ENCODE measurements at regions of chr17 and their contacts with region 1.

Region 1: GRCh38 chr17:77404812-77405581 is 264.2 kb downstream of the SEC14L1 start:
- DNase-seq: peak; percentile 69 to 92 (median 83)
- H3K4me3 ChIP-seq: peak overlapping the region; percentile 89
- H3K4me3 Mint-ChIP-seq: peak overlapping the region; percentile 84 to 99 (median 96)
- H3K27ac ChIP-seq: peak overlapping the region; percentile 48
- H3K27ac Mint-ChIP-seq: peak overlapping the region; percentile 88 to 99 (median 98)
- H3K4me1 ChIP-seq: peaks cover 93% of the 10 kb centered on the region
- H3K4me1 Mint-ChIP-seq: peaks cover 80 to 98% (median 89%) of the 10 kb centered on the region in 3 donors
- H3K27me3 ChIP-seq: no peaks in the 10 kb centered on the region
- H3K27me3 Mint-ChIP-seq: peaks cover 0 to 3% of the 10 kb centered on the region in 2 donors

Region 2: GRCh38 chr17:76791053-76791980 is 613.7 kb before region 1 on chr17:
- CTCF ChIA-PET with region 1: no interaction called
- POLR2A ChIA-PET with region 1: no interaction called
- DNase-seq: peak in 4 of 5 donors; percentile 9 to 49 (median 18)
- H3K4me3 ChIP-seq: no peak overlapping the region
- H3K4me3 Mint-ChIP-seq: peak overlapping the region in 6 of 7 donors; percentile 51 to 78 (median 62)
- H3K27ac ChIP-seq: peak overlapping the region; percentile 33
- H3K27ac Mint-ChIP-seq: peak overlapping the region in 7 of 8 donors; percentile 59 to 87 (median 83)
- H3K4me1 ChIP-seq: peaks cover 13% of the 10 kb centered on the region
- H3K4me1 Mint-ChIP-seq: peaks cover 11 to 12% (median 12%) of the 10 kb centered on the region in 3 donors
- H3K27me3 ChIP-seq: no peaks in the 10 kb centered on the region
- H3K27me3 Mint-ChIP-seq: peaks cover 0 to 2% of the 10 kb centered on the region in 2 donors

Region 3: DNA sequence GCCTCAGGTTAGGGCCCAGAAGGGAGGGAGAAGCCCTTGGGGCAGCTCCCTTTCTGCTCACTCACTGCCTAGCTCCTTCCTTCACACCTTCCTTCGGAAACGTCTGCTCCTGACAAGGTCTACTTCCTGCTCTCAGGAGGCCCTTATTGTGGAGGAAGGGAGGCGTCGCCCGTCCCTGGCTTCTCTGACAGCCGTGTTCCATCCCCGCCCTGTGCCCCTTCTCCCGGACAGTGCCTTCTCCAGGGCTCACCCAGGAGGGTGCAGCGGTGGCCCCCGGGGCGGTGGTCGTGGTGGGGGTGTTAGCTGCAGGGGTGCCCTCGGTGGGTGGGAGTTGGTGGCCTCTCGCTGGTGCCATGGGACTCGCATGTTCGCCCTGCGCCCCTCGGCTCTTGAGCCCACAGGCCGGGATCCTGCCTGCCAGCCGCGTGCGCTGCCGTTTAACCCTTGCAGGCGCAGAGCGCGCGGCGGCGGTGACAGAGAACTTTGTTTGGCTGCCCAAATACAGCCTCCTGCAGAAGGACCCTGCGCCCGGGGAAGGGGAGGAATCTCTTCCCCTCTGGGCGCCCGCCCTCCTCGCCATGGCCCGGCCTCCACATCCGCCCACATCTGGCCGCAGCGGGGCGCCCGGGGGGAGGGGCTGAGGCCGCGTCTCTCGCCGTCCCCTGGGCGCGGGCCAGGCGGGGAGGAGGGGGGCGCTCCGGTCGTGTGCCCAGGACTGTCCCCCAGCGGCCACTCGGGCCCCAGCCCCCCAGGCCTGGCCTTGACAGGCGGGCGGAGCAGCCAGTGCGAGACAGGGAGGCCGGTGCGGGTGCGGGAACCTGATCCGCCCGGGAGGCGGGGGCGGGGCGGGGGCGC is 32.3 kb before region 1 on chr17:
- CTCF ChIA-PET with region 1: interaction called, 29 read pairs
- POLR2A ChIA-PET with region 1: interaction called, 11 read pairs
- DNase-seq: peak; percentile 55 to 76 (median 65)
- H3K4me3 ChIP-seq: peak overlapping the region; percentile 77
- H3K4me3 Mint-ChIP-seq: peak overlapping the region; percentile 80 to 93 (median 82)
- H3K27ac ChIP-seq: peak overlapping the region; percentile 82
- H3K27ac Mint-ChIP-seq: peak overlapping the region; percentile 79 to 95 (median 88)
- H3K4me1 ChIP-seq: peaks cover 70% of the 10 kb centered on the region
- H3K4me1 Mint-ChIP-seq: peaks cover 56 to 71% (median 67%) of the 10 kb centered on the region in 3 donors
- H3K27me3 ChIP-seq: no peaks in the 10 kb centered on the region
- H3K27me3 Mint-ChIP-seq: no peaks in the 10 kb centered on the region

Region 4: GRCh38 chr17:77391668-77392375 is 13.2 kb before region 1 on chr17:
- CTCF ChIA-PET with region 1: interaction called, 113 read pairs
- POLR2A ChIA-PET with region 1: interaction called, 8 read pairs
- DNase-seq: peak in 2 of 5 donors; percentile 26 to 63
- H3K4me3 ChIP-seq: no peak overlapping the region
- H3K4me3 Mint-ChIP-seq: peak overlapping the region; percentile 20 to 76 (median 62)
- H3K27ac ChIP-seq: peak overlapping the region; percentile 3
- H3K27ac Mint-ChIP-seq: peak overlapping the region; percentile 76 to 96 (median 84)
- H3K4me1 ChIP-seq: peaks cover 72% of the 10 kb centered on the region
- H3K4me1 Mint-ChIP-seq: peaks cover 74 to 89% (median 79%) of the 10 kb centered on the region in 3 donors
- H3K27me3 ChIP-seq: no peaks in the 10 kb centered on the region
- H3K27me3 Mint-ChIP-seq: no peaks in the 10 kb centered on the region

Region 5: GRCh38 chr17:77429919-77430752 is 25.1 kb after region 1 on chr17:
- CTCF ChIA-PET with region 1: interaction called, 45 read pairs
- POLR2A ChIA-PET with region 1: interaction called, 5 read pairs
- DNase-seq: peak; percentile 70 to 86 (median 74)
- H3K4me3 ChIP-seq: no peak overlapping the region
- H3K4me3 Mint-ChIP-seq: peak overlapping the region in 2 of 7 donors; percentile 8 to 27
- H3K27ac ChIP-seq: no peak overlapping the region
- H3K27ac Mint-ChIP-seq: peak overlapping the region; percentile 29 to 89 (median 72)
- H3K4me1 ChIP-seq: peaks cover 99% of the 10 kb centered on the region
- H3K4me1 Mint-ChIP-seq: peaks cover 70 to 98% (median 80%) of the 10 kb centered on the region in 3 donors
- H3K27me3 ChIP-seq: no peaks in the 10 kb centered on the region
- H3K27me3 Mint-ChIP-seq: no peaks in the 10 kb centered on the region

Region 6: GRCh38 chr17:77451245-77451893 is 46.4 kb after region 1 on chr17:
- CTCF ChIA-PET with region 1: interaction called, 16 read pairs
- POLR2A ChIA-PET with region 1: interaction called, 9 read pairs
- DNase-seq: peak; percentile 60 to 80 (median 71)
- H3K4me3 ChIP-seq: peak overlapping the region; percentile 95
- H3K4me3 Mint-ChIP-seq: peak overlapping the region; percentile 89 to 99 (median 98)
- H3K27ac ChIP-seq: peak overlapping the region; percentile 77
- H3K27ac Mint-ChIP-seq: peak overlapping the region; percentile 85 to 100 (median 97)
- H3K4me1 ChIP-seq: peaks cover 57% of the 10 kb centered on the region
- H3K4me1 Mint-ChIP-seq: peaks cover 50 to 61% (median 59%) of the 10 kb centered on the region in 3 donors
- H3K27me3 ChIP-seq: no peaks in the 10 kb centered on the region
- H3K27me3 Mint-ChIP-seq: no peaks in the 10 kb centered on the region

Region 7: DNA sequence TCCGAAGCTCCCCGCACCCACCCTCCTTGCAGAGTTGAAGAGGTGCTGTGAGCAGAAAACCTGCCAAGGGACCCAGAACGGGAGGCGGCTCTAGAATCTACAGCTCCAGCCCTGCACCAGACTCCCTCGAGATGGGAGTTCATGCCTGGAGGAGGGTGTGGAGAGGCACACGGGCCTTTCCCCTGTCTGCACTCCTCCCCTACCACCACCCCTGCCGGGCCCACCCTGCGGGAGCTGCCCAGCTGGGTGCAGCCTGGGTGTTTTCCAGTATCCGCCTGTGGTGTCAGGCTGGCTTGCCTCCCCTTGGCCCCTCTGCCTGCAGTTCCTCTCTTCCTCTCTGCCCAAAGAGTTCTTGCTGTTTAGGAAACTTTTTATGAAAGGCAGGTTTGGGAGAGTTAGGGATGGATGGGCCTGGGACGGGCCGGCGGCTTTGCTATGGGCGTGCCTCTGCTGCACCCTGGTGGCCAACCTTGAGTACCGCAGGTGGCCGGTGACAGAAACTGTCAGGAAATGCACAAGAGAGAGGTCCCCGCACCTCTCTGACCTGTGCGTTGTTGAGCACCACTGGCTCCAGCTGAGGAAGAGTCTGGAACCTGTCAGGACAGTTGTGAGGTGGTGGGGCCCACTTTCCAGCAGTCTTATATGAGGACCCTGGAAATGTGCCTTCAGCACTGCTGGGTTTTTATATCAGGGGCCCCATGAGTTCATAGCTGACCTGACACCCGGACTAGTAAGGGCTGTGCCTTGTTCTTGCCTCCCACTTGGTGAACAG is 89.9 kb after region 1 on chr17:
- CTCF ChIA-PET with region 1: interaction called, 52 read pairs
- POLR2A ChIA-PET with region 1: interaction called, 3 read pairs
- DNase-seq: peak; percentile 64 to 81 (median 72)
- H3K4me3 ChIP-seq: no peak overlapping the region
- H3K4me3 Mint-ChIP-seq: peak overlapping the region in 1 of 7 donors; percentile 12
- H3K27ac ChIP-seq: no peak overlapping the region
- H3K27ac Mint-ChIP-seq: peak overlapping the region; percentile 75 to 96 (median 86)
- H3K4me1 ChIP-seq: peaks cover 17% of the 10 kb centered on the region
- H3K4me1 Mint-ChIP-seq: peaks cover 19 to 40% (median 24%) of the 10 kb centered on the region in 3 donors
- H3K27me3 ChIP-seq: no peaks in the 10 kb centered on the region
- H3K27me3 Mint-ChIP-seq: no peaks in the 10 kb centered on the region

Region 8: DNA sequence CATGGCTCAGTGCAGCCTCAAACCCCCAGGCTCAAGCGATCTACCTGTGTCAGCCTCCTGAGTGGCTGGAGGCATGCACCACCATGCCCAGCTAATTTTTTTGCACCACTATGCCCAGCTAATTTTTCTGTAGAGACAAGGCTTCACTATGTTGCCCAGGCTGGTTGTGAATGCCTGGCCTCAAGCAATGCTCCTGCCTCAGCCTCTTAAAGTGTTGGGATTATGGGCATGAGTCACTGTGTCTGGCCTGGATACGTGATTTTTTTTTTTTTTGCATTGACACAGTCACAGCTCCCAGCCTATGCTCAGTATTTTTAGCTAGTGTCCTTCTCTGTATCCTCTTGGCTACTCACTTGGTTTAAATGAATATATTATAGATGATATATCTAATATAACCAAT is 176.5 kb after region 1 on chr17:
- CTCF ChIA-PET with region 1: no interaction called
- POLR2A ChIA-PET with region 1: no interaction called
- DNase-seq: no peak
- H3K4me3 ChIP-seq: no peak overlapping the region
- H3K4me3 Mint-ChIP-seq: no peak overlapping the region
- H3K27ac ChIP-seq: no peak overlapping the region
- H3K27ac Mint-ChIP-seq: peak overlapping the region in 1 of 8 donors; percentile 70
- H3K4me1 ChIP-seq: no peaks in the 10 kb centered on the region
- H3K4me1 Mint-ChIP-seq: peaks cover 0 to 4% (median 3%) of the 10 kb centered on the region in 3 donors
- H3K27me3 ChIP-seq: no peaks in the 10 kb centered on the region
- H3K27me3 Mint-ChIP-seq: peaks cover 1 to 19% of the 10 kb centered on the region in 2 donors

Measured in CD8-positive, alpha-beta memory T cell (primary cell).